Gastrocnemius medialis (tissue), 4 donors: ENCODE measurements at regions of chr19 and their contacts with region 1.

Region 1: DNA sequence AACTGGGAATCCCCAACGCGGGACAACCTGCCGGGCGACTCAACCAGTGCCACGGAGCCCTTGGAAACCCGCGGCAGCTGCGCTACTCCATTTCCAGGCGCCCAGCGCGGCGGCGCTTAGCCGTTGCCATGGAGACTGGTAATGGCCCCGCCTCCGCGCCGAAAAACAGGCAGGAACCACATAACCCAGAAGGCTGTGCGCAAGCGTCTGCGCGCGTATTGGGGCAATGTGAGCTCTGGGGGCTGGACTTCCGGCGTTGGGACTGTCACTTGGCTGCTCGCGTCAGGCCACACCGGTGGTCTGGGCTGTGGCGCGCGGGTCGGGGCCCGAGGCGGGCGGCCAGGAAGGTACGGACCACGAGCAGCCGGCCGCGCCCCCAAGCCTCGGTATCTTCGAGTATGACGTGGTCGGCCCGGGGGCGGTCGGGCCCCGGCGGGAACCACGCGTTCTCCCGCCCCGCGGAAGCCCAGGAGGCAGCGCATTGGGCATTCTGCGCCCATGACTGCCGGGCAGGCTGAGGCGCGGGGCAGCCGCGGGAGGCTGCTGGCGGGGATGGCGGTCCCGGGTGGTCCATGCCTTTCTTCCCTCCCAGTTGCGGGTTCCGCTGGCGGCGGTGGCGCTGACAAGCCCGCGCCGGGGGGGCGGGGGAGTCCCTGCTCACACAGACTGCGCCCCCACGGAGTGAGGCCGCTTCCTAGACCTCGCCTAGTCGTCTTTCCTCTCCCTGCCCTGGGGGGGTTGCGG is at the start of gene ZNF324B:
- DNase-seq: peak; percentile 91 to 95
- ATAC-seq: peak; percentile 99 to 100
- H3K4me3 ChIP-seq: peak within 1 kb of the TSS; percentile 83 to 96 (median 88)
- H3K27ac ChIP-seq: peak within 1 kb of the TSS; percentile 73 to 81 (median 78)
- H3K4me1 ChIP-seq: peaks cover 7 to 10% of the 10 kb centered on the region in 2 donors
- H3K27me3 ChIP-seq: peaks cover 0 to 11% (median 3%) of the 10 kb centered on the region in 3 donors
- CTCF ChIP-seq: no peak
- POLR2A ChIP-seq: peak; percentile 72 to 85
- total RNA-seq, gene ZNF324B: 3.8 to 7.6 (median 7.0) TPM

Region 2: DNA sequence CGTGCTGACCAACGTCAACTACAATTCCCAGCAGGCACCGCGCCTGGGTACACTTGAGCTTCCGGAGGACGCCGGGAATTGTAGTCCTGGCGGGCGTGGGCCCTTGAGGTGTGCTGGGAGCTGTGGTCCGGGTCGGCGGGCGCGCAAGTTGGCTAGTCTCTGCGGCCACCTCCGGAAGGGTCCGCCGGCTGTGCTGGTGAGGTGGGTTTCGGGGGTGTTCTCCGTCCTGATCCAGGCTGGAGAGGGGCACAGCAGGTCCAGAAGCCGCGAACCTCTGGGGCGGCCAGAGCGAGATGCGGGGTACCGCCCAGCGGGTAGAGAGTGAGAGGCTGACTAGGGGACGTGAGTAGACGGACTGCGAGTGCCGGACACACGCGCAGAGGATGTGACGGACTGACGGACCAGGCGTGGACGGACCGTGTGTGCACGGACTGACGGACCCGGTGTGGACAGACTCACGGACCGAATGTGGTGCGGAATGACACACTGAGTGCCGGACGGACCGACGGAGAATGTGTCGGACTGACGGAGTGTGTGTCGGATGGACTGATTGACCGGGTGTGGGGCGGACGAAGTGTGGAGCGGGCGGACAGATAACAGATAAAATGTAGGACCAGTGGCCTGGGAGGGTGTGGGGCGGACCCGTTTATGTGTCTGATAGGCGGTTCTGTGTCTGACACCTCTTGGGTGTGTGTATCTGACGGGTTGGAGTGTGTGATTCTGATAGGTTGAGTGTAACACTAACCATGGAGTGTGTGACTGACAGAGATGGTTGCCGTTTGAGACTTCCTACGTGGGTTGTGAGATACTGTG is 124.4 kb before region 1 on chr19 and contains the start of gene ZSCAN22:
- in situ Hi-C with region 1: no loop called
- intact Hi-C with region 1: loop called (anchors 1 kb)
- DNase-seq: peak; percentile 95 to 96
- ATAC-seq: peak; percentile 98
- H3K4me3 ChIP-seq: peak within 1 kb of the TSS; percentile 91 to 96 (median 94)
- H3K27ac ChIP-seq: peak within 1 kb of the TSS; percentile 94 to 99 (median 98)
- H3K4me1 ChIP-seq: peaks cover 24 to 29% of the 10 kb centered on the region in 2 donors
- H3K27me3 ChIP-seq: no peaks in the 10 kb centered on the region
- CTCF ChIP-seq: no peak
- POLR2A ChIP-seq: peak; percentile 79 to 81
- total RNA-seq, gene ZSCAN22: 1.1 to 2.4 (median 1.8) TPM

Region 3: GRCh38 chr19:58372311-58373133 is 79.0 kb before region 1 on chr19:
- in situ Hi-C with region 1: no loop called
- intact Hi-C with region 1: no loop called
- DNase-seq: no peak
- ATAC-seq: no peak
- H3K4me3 ChIP-seq: no peak overlapping the region
- H3K27ac ChIP-seq: no peak overlapping the region
- H3K4me1 ChIP-seq: no peaks in the 10 kb centered on the region
- H3K27me3 ChIP-seq: no peaks in the 10 kb centered on the region
- CTCF ChIP-seq: no peak
- POLR2A ChIP-seq: no peak

Region 4: DNA sequence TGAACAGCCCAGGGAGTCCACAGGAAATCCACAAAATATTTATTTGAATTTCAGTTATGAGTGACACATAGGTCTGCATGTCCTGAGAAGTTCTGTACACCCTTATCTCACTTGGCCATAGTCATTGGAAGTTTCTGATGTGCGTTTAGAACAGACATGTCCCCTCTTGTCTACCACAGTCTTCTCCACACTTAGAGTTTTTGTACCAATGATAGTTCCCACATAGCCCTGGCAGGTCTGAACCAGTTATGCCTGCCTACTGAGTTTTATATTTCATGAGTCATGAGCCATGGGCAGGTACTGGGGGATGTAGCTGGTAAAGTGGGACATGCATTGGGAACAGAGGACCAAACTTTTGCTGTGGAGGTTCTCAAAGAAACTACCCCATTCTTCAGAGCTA is 22.9 kb before region 1 on chr19:
- in situ Hi-C with region 1: no loop called
- intact Hi-C with region 1: no loop called
- DNase-seq: no peak
- ATAC-seq: no peak
- H3K4me3 ChIP-seq: no peak overlapping the region
- H3K27ac ChIP-seq: no peak overlapping the region
- H3K4me1 ChIP-seq: no peaks in the 10 kb centered on the region
- H3K27me3 ChIP-seq: no peaks in the 10 kb centered on the region
- CTCF ChIP-seq: no peak
- POLR2A ChIP-seq: no peak

Region 5: GRCh38 chr19:58466760-58467589 is 15.4 kb after region 1 on chr19 and contains the start of gene ZNF324:
- in situ Hi-C with region 1: no loop called
- intact Hi-C with region 1: loop called (anchors 1 kb)
- DNase-seq: peak; percentile 97
- ATAC-seq: peak; percentile 99
- H3K4me3 ChIP-seq: peak within 1 kb of the TSS; percentile 87 to 100 (median 99)
- H3K27ac ChIP-seq: peak within 1 kb of the TSS; percentile 68 to 92 (median 88)
- H3K4me1 ChIP-seq: peaks cover 10 to 13% of the 10 kb centered on the region in 2 donors
- H3K27me3 ChIP-seq: no peaks in the 10 kb centered on the region
- CTCF ChIP-seq: no peak
- POLR2A ChIP-seq: peak; percentile 63 to 71
- total RNA-seq, gene ZNF324: 8.1 to 11.4 (median 11.3) TPM